ENCODE measurements at regions of chr17 and their contacts with region 1.

Region 1: GRCh38 chr17:57302690-57303465 is 46.6 kb downstream of the MSI2 start:
- DNase-seq: peak; percentile 46

Region 2: DNA sequence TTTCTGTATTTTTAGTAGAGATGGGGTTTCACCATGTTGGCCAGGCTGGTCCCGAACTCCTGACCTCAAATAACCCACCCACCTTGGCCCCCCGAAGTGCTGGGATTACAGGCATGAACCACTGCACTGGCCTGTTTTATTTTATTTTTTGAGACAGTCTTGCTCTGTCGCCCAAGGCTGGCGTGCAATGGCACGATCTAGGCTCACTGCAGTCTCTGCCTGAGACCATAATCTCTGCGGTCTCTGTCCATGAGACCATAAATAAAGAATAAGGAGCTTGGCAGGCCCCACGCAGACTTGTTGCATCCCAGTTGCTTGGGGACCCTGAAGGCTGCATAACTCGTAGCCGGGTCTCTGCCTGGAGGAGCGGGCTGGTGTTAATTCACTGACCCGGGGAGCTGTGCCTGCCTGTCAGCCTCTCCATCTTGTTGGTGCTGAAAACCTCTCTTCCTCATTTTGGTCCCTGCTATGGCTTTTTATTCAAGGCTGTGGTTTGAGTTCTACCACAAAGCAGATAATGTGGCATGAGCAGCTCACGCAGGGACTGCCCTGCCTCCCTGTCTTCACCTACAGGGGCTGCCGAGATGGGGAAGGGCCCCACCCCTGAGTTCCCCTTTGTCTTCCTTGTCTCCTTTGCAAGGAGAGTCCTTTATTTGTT is 35.5 kb after region 1 on chr17:
- intact Hi-C with region 1: loop called (anchors 5 kb)
- DNase-seq: no peak

Region 3: GRCh38 chr17:57597531-57598453 is 294.9 kb after region 1 on chr17:
- intact Hi-C with region 1: no loop called
- DNase-seq: no peak

Measured in cardiac septum (tissue), 1 donor.